ENCODE measurements at regions of chr3 and their contacts with region 1.

Region 1: DNA sequence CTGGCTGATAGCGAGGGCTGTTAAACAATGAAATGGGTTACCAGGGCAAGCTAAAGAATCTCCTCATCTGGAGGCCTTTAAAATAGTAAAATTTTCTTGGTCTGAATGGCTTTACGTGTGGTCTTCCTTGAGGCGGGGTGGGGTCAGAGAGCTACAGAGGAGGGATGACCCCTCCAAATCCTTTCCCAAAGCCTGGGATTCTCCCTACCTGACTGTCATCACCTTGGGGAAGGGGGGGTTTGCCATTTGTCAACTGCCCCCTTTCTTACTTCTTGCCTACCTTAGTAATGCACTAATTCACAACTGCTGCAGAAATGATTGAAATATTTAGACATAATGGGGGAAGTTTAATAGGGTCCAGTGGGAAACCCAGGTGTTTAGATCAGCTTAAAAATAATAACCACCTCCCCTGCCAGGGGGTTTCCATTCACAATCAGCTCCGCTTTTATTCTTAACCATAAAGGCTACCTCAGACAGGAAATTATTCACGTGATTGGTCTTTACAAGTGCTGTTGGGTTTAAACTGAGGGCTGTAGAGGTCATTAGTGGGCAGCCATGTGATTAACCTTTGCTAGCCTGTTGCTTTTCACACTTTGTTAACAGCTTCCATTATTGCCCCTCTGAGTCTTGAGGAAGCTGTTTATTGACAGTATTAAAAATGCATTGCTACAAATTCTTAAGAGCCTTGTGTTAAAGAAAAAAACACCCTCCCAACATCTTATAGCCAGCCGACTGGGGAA is 276.5 kb upstream of the ATP11B start:
- DNase-seq: no peak
- H3K4me3 ChIP-seq: no peak overlapping the region
- H3K4me3 Mint-ChIP-seq: no peak overlapping the region
- H3K27ac ChIP-seq: no peak overlapping the region
- H3K27ac Mint-ChIP-seq: no peak overlapping the region
- H3K4me1 ChIP-seq: no peaks in the 10 kb centered on the region
- H3K4me1 Mint-ChIP-seq: no peaks in the 10 kb centered on the region
- H3K27me3 ChIP-seq: no peaks in the 10 kb centered on the region
- H3K27me3 Mint-ChIP-seq: peaks cover 0 to 2% (median 0%) of the 10 kb centered on the region in 3 donors
- CTCF ChIP-seq: no peak

Region 2: DNA sequence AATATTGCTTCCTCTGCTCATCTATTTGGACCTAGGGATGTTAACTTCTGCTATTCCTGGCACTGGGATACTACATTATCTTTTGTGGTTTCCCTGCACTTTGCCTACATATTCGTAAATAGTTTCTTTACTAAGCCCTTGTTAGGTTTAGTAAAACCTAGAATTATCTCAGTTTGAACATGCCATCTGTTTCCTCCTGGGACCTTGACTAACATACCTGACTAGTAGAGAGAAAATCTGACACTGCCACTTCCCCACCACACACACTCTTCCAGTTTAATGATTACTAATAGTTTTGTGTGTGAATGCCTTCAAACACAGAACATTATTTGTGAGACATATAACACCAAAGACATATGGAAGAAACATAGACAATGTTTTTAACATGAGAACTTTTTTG is 833.2 kb before region 1 on chr3:
- intact Hi-C with region 1: loop called in 1 of 2 experiments (anchors 5 kb)
- DNase-seq: no peak
- H3K4me3 ChIP-seq: no peak overlapping the region
- H3K4me3 Mint-ChIP-seq: no peak overlapping the region
- H3K27ac ChIP-seq: no peak overlapping the region
- H3K27ac Mint-ChIP-seq: no peak overlapping the region
- H3K4me1 ChIP-seq: no peaks in the 10 kb centered on the region
- H3K4me1 Mint-ChIP-seq: no peaks in the 10 kb centered on the region
- H3K27me3 ChIP-seq: peaks cover 0 to 4% of the 10 kb centered on the region in 2 donors
- H3K27me3 Mint-ChIP-seq: peaks cover 0 to 8% (median 2%) of the 10 kb centered on the region in 3 donors
- CTCF ChIP-seq: no peak

Region 3: GRCh38 chr3:183317886-183318865 is 801.4 kb after region 1 on chr3:
- intact Hi-C with region 1: no loop called
- DNase-seq: peak in 2 of 3 donors; percentile 47 to 52
- H3K4me3 ChIP-seq: no peak overlapping the region
- H3K4me3 Mint-ChIP-seq: no peak overlapping the region
- H3K27ac ChIP-seq: peak overlapping the region in 1 of 2 donors; percentile 49
- H3K27ac Mint-ChIP-seq: peak overlapping the region in 4 of 7 donors; percentile 15 to 61 (median 44)
- H3K4me1 ChIP-seq: peaks cover 24 to 28% of the 10 kb centered on the region in 2 donors
- H3K4me1 Mint-ChIP-seq: peaks cover 27% of the 10 kb centered on the region
- H3K27me3 ChIP-seq: no peaks in the 10 kb centered on the region
- H3K27me3 Mint-ChIP-seq: peaks cover 0 to 2% (median 0%) of the 10 kb centered on the region in 3 donors
- CTCF ChIP-seq: no peak

Measured in CD14-positive monocyte (primary cell).